ENCODE measurements at regions of chr11 and their contacts with region 1.

Region 1: DNA sequence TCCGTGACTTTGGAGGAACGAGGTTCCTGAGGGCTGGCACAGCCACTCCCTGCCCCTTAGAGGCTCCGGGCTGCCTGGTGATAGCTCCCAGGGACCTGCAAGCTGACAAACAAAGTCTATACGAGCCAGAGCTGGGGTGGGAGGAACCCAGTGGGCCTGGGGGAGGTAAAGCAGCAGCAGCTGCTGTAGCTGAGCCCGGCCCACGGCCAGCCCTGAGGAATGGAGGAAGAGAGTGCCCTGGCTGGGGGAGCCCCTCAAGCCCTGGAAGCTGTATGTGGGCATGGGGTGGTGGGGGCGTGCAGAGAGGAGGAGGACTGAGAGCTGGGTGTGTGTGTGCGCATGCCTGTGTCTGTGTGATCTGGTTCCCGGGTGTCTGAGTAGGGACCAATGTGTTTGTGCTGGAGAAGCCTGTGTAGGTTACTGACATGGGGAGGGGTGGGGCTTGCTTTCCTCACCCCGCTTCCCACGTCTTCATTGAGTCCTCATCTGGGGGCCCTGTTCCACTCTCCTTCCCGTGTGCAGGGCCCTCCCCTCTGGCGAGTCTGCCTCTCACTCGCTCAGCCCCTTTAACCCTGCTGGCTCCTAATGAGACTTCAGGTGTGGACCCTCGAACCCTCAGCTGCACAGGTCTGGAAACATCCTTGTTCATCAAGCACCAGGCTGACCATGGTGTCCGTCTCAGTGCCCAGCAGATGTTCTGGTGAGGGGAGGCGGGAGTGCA is 10.7 kb downstream of the ST3GAL4 start:
- DNase-seq: no peak
- ATAC-seq: no peak
- H3K4me3 ChIP-seq: no peak overlapping the region
- H3K27ac ChIP-seq: no peak overlapping the region
- H3K4me1 ChIP-seq: peaks cover 0 to 3% of the 10 kb centered on the region in 2 donors
- H3K27me3 ChIP-seq: no peaks in the 10 kb centered on the region
- CTCF ChIP-seq: no peak
- POLR2A ChIP-seq: no peak

Region 2: DNA sequence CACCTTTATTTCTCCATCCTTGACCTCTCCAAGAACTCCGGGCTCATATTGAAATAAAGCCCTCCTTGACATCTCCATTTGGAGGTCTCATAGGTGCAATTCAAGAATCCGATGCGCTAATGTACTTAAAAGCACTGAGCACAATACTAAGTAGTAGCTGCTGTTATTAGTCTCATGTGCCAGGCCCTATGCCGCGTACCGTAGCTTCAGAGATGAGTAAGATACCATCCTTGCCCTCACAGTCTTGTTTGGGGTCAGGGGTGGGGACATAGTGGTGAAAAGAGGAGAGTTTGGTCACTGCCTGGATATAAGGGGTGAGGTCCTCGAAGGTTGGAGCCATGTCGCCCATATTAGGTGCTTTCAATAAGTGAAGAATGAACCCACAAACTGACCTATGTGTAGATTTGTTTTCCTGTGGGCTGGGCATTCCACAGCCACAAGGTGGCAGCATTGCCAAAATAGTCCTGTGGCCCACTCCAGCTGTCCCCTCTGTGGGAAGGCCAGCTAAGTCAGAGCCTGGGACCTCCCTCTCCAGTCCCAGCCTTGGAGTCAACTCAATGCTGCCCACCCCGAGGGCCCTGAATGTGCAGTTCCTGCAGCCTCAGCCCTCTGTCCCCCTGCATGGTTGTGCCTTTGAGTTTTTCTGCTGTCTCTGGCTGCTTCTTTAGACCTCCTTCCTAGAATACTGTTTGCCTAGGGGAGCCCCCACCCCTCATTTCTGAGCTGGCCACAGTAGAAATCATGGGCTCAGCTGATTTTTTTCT is 55.8 kb before region 1 on chr11:
- in situ Hi-C with region 1: no loop called
- intact Hi-C with region 1: loop called (anchors 1 kb)
- DNase-seq: peak; percentile 53 to 69
- ATAC-seq: peak; percentile 73 to 75
- H3K4me3 ChIP-seq: no peak overlapping the region
- H3K27ac ChIP-seq: peak overlapping the region in 3 of 4 donors; percentile 23 to 79 (median 43)
- H3K4me1 ChIP-seq: peaks cover 16 to 29% of the 10 kb centered on the region in 2 donors
- H3K27me3 ChIP-seq: no peaks in the 10 kb centered on the region
- CTCF ChIP-seq: peak; percentile 67 to 89 (median 80)
- POLR2A ChIP-seq: no peak

Region 3: DNA sequence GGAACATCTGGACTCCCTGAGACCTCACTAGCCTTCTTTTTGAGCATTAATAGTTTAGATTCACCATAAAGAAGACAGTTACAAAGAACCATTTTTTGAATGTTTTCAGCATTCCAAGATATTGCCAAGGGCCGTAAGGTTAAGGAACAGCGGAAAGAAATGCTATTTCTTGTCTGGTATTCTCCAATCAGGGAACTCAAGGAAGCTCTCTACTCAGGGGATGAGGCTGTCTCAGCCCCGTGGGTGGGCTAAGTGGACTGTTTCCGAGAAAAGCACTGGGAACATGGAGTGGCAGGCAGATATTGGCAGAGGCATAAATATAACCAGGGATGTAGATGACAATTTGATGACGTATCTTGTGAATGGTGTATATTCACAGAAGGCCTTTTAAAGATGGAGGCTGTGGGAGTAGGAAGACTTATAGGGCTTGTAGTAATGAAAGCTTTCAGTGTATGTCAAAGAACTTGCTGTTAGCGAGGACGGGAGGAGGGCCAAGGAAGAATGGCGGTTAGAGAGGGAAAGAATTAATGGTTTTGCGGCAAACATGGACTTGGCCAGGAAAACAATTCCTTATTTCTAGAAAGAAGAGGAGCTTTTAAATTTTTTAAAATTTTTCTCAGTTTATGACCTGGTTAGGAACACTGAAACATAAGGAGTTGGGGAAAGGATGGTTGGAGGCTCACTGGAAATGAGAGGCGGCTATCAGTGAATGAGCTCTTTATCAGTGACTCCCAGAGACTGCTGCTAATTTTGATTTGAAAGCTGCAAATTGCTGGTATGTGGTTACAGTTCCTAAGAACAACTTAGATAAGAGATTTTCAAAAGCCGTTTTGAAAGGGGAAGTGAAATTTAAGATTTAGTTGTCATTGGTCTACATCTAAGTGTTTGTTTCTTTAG is 53.8 kb after region 1 on chr11:
- in situ Hi-C with region 1: no loop called
- intact Hi-C with region 1: no loop called
- DNase-seq: no peak
- ATAC-seq: no peak
- H3K4me3 ChIP-seq: no peak overlapping the region
- H3K27ac ChIP-seq: peak overlapping the region in 1 of 4 donors; percentile 46
- H3K4me1 ChIP-seq: peaks cover 5 to 26% of the 10 kb centered on the region in 2 donors
- H3K27me3 ChIP-seq: no peaks in the 10 kb centered on the region
- CTCF ChIP-seq: no peak
- POLR2A ChIP-seq: no peak